ENCODE measurements at regions of chr1 and their contacts with region 1.

Region 1: DNA sequence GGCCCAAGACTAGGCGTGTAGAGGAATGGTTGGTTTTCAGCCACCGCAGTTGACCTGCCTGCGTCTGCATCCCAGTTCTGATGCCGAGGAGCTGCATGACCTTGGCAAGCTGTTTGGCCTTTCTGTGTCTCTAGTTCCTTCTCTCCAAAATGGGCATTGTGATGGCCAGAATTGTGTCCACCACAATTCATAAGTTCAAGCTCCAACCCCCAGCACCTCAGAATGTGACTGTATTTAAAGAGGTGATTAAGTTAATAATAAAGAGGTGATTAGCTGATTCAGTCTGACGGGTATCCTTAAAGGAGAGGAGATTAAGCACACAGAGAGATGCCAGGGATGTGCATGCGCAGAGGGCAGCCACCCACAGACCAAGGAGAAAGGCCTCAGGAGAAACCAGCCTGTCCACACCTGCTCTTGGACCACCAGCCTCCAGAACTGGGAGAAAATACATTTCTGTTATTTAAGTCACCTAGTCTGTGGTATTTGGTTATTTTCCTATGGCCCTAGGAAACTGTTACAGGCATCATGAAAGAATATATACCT is 28.5 kb downstream of the MAB21L3 start:
- DNase-seq: no peak
- H3K4me3 ChIP-seq: no peak overlapping the region
- H3K27ac ChIP-seq: no peak overlapping the region
- H3K27me3 ChIP-seq: no peaks in the 10 kb centered on the region
- CTCF ChIP-seq: no peak

Region 2: DNA sequence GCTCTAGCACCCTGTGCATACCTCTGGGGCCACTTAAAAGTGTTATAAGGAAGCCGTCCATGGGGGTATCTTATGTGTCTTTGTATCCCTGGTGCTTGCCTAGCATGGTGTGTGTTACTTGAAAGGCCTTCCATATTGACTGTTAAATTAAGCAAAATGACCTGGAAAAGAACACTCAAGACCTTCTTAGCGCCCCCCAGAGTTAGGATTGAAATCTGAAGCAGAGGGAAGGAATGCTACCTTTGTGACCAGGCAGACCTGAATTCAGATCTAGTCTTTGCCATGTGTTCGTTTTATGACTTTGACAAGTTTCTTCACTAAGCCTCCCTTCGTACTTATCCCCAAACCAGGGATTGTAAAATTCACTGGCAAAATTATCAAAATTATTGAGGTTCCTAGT is 103.4 kb before region 1 on chr1:
- CTCF ChIA-PET with region 1: no interaction called
- POLR2A ChIA-PET with region 1: no interaction called
- DNase-seq: no peak
- H3K4me3 ChIP-seq: no peak overlapping the region
- H3K27ac ChIP-seq: no peak overlapping the region
- H3K27me3 ChIP-seq: no peaks in the 10 kb centered on the region
- CTCF ChIP-seq: no peak

Region 3: DNA sequence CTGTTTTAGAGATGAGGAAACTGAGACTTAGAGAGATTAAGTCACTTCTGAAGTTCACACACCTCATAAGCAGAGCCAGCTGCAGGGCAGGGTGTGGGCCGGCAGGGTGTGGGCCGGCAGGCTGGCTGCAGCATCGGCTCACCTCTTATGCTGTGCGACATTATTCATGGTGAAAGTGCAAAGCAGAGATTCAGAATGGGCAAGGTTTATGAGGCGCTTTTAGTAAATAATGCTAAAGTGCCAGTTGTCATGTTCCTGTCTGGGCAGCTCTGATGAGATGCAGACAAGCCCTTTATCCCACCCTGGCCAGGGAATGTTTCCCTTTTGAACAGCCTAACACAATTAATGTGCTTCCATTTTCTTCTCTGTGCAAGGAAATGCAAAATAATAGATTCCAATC is 13.9 kb before region 1 on chr1:
- CTCF ChIA-PET with region 1: interaction called, 12 read pairs
- POLR2A ChIA-PET with region 1: no interaction called
- DNase-seq: no peak
- H3K4me3 ChIP-seq: no peak overlapping the region
- H3K27ac ChIP-seq: no peak overlapping the region
- H3K27me3 ChIP-seq: peaks cover 6% of the 10 kb centered on the region
- CTCF ChIP-seq: no peak

Region 4: GRCh38 chr1:116151739-116152576 is 12.3 kb after region 1 on chr1:
- CTCF ChIA-PET with region 1: interaction called, 45 read pairs
- POLR2A ChIA-PET with region 1: no interaction called
- DNase-seq: peak; percentile 21
- H3K4me3 ChIP-seq: peak overlapping the region; percentile 56
- H3K27ac ChIP-seq: no peak overlapping the region
- H3K27me3 ChIP-seq: peaks cover 8% of the 10 kb centered on the region
- CTCF ChIP-seq: peak; percentile 73

Region 5: GRCh38 chr1:116492358-116492811 is 352.7 kb after region 1 on chr1:
- CTCF ChIA-PET with region 1: interaction called, 215 read pairs
- POLR2A ChIA-PET with region 1: no interaction called
- DNase-seq: no peak
- H3K4me3 ChIP-seq: no peak overlapping the region
- H3K27ac ChIP-seq: no peak overlapping the region
- H3K27me3 ChIP-seq: peaks cover 3% of the 10 kb centered on the region
- CTCF ChIP-seq: no peak

Measured in AG04450 (cell line).